PC-3 (cell line): ENCODE measurements at regions of chr12 and their contacts with region 1.

Region 1: GRCh38 chr12:12837025-12837872 is 24.1 kb downstream of the DDX47 start:
- DNase-seq: peak; percentile 91
- ATAC-seq: peak; percentile 45
- H3K4me3 ChIP-seq: no peak overlapping the region
- H3K27ac ChIP-seq: peak overlapping the region; percentile 98
- H3K4me1 ChIP-seq: peaks cover 67% of the 10 kb centered on the region
- H3K27me3 ChIP-seq: no peaks in the 10 kb centered on the region
- CTCF ChIP-seq: peak; percentile 73

Region 2: GRCh38 chr12:12582895-12583303 is 254.3 kb before region 1 on chr12:
- CTCF ChIA-PET with region 1: no interaction called
- POLR2A ChIA-PET with region 1: no interaction called
- intact Hi-C with region 1: no loop called
- DNase-seq: peak; percentile 91
- ATAC-seq: peak; percentile 71
- H3K4me3 ChIP-seq: no peak overlapping the region
- H3K27ac ChIP-seq: peak overlapping the region; percentile 100
- H3K4me1 ChIP-seq: peaks cover 65% of the 10 kb centered on the region
- H3K27me3 ChIP-seq: no peaks in the 10 kb centered on the region
- CTCF ChIP-seq: no peak

Region 3: DNA sequence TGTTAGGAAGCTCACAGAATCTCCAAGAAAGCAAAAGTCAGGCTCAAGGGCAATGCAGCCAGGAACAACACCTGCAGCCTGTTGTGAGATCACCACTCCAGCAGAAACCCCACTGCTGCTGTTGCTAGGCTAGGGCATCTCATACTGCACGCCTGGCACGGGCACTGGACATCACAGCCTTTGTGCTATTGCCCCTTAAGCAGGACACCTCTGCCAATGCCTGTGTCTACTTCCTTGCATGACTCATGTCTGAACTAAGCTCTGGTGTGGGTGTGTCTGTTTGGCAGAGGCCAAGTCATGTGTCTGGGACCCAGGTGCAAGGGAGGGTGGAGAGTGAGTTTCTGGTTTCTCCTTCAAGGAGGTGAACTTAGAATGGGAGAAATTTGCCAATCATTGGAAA is 34.1 kb before region 1 on chr12:
- CTCF ChIA-PET with region 1: no interaction called
- POLR2A ChIA-PET with region 1: no interaction called
- intact Hi-C with region 1: loop called (anchors 5 kb)
- DNase-seq: peak; percentile 95
- ATAC-seq: peak; percentile 75
- H3K4me3 ChIP-seq: no peak overlapping the region
- H3K27ac ChIP-seq: peak overlapping the region; percentile 100
- H3K4me1 ChIP-seq: peaks cover 59% of the 10 kb centered on the region
- H3K27me3 ChIP-seq: no peaks in the 10 kb centered on the region
- CTCF ChIP-seq: no peak

Region 4: DNA sequence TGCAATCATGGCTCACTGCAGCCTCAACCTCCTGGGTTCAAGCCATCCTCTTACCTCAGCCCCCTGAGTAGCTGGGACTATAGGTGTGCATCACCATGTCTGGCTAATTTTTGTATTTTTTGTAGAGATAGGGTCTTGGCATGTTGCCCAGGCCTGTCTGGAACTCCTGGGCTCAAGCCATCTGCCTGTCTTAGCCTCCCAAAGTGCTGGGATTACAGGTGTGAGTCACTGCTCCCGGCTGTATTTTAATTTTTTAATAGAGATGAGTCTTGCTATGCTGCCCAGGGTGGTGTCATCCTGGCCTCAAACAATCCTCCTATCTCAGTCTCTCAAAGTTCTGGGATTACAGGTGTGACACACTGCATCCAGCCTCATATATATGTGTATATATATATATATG is 22.4 kb after region 1 on chr12:
- CTCF ChIA-PET with region 1: no interaction called
- POLR2A ChIA-PET with region 1: no interaction called
- intact Hi-C with region 1: no loop called
- DNase-seq: peak; percentile 75
- ATAC-seq: peak; percentile 90
- H3K4me3 ChIP-seq: no peak overlapping the region
- H3K27ac ChIP-seq: no peak overlapping the region; the same call in 1 of the 2 replicates
- H3K4me1 ChIP-seq: peaks cover 5% of the 10 kb centered on the region; the same call in 1 of the 2 replicates
- H3K27me3 ChIP-seq: no peaks in the 10 kb centered on the region
- CTCF ChIP-seq: no peak

Region 5: GRCh38 chr12:12872139-12872881 is 35.1 kb after region 1 on chr12:
- CTCF ChIA-PET with region 1: interaction called, 3 read pairs
- POLR2A ChIA-PET with region 1: interaction called, 7 read pairs
- intact Hi-C with region 1: loop called (anchors 1 kb)
- DNase-seq: peak; percentile 96
- ATAC-seq: peak; percentile 70
- H3K4me3 ChIP-seq: peak overlapping the region; percentile 47; the same call in 1 of the 2 replicates
- H3K27ac ChIP-seq: peak overlapping the region; percentile 99
- H3K4me1 ChIP-seq: peaks cover 58% of the 10 kb centered on the region
- H3K27me3 ChIP-seq: no peaks in the 10 kb centered on the region
- CTCF ChIP-seq: no peak

Region 6: GRCh38 chr12:12890815-12891645 is 53.8 kb after region 1 on chr12 and contains the start of gene GPRC5A:
- CTCF ChIA-PET with region 1: interaction called, 18 read pairs
- POLR2A ChIA-PET with region 1: interaction called, 15 read pairs
- intact Hi-C with region 1: loop called (anchors 1 kb)
- DNase-seq: peak; percentile 97
- ATAC-seq: peak; percentile 75
- H3K4me3 ChIP-seq: peak within 1 kb of the TSS; percentile 97
- H3K27ac ChIP-seq: peak within 1 kb of the TSS; percentile 99
- H3K4me1 ChIP-seq: peaks cover 48% of the 10 kb centered on the region
- H3K27me3 ChIP-seq: no peaks in the 10 kb centered on the region
- CTCF ChIP-seq: peak; percentile 50; the same call in 1 of the 2 replicates
- total RNA-seq, gene GPRC5A: 140 and 144 TPM in 2 replicates